ENCODE measurements at regions of chr10 and their contacts with region 1.

Region 1: DNA sequence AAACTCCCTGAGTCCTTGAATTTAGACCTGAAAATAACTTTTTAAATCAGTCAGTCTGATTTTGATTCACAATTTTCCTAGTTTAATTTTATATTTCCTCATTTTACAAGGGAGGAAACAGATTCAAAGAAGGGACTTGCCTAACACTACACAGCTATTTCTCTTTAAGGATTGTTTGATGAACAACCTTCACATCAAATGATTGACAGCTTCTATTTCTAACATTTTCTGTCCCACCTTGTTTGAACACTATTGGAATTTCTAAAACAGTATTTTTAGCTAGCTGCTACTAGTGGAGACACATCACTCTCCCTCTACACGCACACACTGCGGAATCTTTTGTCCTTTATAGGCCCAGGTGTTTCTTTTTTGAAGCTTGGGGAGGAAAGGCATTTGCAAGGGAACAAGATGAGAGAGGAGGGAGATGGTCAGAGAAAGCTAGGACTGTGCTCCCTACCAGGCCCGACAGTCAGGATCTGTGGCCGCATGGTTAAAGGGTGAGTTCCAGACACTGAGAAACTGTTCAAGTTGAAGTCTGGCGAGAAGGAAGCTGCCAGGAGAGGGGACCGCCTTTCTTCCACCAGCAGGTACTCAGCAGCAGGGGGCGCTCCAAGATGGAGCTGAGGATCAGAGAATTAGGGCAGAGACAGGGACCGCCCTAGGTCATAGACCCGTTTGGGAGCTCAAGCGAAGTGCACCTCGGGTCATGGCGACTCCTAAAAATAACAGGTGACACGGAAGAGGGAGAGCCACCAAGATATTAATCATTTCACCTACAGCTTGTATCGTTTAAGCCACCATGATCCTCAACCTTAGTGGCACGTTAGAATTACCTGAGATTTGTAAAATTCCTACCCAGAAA is 49.7 kb downstream of the DNAJC12 start:
- DNase-seq: no peak
- ATAC-seq: peak; percentile 84
- H3K4me3 ChIP-seq: no peak overlapping the region
- H3K27ac ChIP-seq: no peak overlapping the region
- H3K4me1 ChIP-seq: peaks cover 20% of the 10 kb centered on the region
- H3K27me3 ChIP-seq: no peaks in the 10 kb centered on the region
- CTCF ChIP-seq: peak; percentile 73 to 85 (median 83)
- EP300 ChIP-seq: no peak
- POLR2A ChIP-seq: no peak
- RAD21 ChIP-seq: peak; percentile 84

Region 2: DNA sequence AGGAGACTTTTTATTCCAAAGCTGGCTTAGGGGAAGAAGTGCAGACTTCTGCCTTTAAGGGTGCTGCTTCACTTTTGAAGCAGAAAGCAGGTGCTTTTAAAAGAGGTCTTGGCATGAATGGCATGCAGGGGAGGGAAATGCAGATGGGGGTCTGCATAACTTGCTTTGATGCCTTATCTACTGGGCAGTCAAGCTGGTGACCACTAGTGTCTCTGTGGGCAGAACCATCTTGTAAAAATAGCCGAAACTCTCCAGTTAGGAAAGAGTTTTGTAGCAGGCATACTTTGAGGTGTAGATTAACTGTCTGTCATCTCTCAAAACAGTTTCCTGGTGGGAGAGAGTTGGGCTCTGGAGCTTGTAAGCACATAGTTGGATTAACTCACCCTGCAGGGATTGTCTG is 82.3 kb before region 1 on chr10:
- CTCF ChIA-PET with region 1: no interaction called
- POLR2A ChIA-PET with region 1: no interaction called
- RAD21 ChIA-PET with region 1: no interaction called
- SMC1A ChIA-PET with region 1: no interaction called
- in situ Hi-C with region 1: no loop called
- intact Hi-C with region 1: no loop called
- DNase-seq: no peak
- ATAC-seq: no peak
- H3K4me3 ChIP-seq: no peak overlapping the region
- H3K27ac ChIP-seq: no peak overlapping the region
- H3K4me1 ChIP-seq: no peaks in the 10 kb centered on the region
- H3K27me3 ChIP-seq: no peaks in the 10 kb centered on the region
- CTCF ChIP-seq: no peak
- EP300 ChIP-seq: no peak
- POLR2A ChIP-seq: no peak
- RAD21 ChIP-seq: no peak

Region 3: GRCh38 chr10:67772894-67773511 is 15.3 kb before region 1 on chr10:
- CTCF ChIA-PET with region 1: interaction called, 40 read pairs
- POLR2A ChIA-PET with region 1: interaction called, 4 read pairs
- RAD21 ChIA-PET with region 1: interaction called, 6 read pairs
- SMC1A ChIA-PET with region 1: interaction called, 7 read pairs
- in situ Hi-C with region 1: no loop called
- intact Hi-C with region 1: no loop called
- DNase-seq: peak; percentile 90
- ATAC-seq: peak; percentile 93
- H3K4me3 ChIP-seq: no peak overlapping the region
- H3K27ac ChIP-seq: peak overlapping the region; percentile 82
- H3K4me1 ChIP-seq: peaks cover 42% of the 10 kb centered on the region
- H3K27me3 ChIP-seq: no peaks in the 10 kb centered on the region
- CTCF ChIP-seq: no peak
- EP300 ChIP-seq: peak; percentile 87 to 96
- POLR2A ChIP-seq: no peak
- RAD21 ChIP-seq: no peak

Region 4: GRCh38 chr10:67803588-67804394 is 15.5 kb after region 1 on chr10:
- CTCF ChIA-PET with region 1: interaction called, 19 read pairs
- POLR2A ChIA-PET with region 1: no interaction called
- RAD21 ChIA-PET with region 1: interaction called, 3 read pairs
- SMC1A ChIA-PET with region 1: interaction called, 6 read pairs
- in situ Hi-C with region 1: no loop called
- intact Hi-C with region 1: no loop called
- DNase-seq: no peak
- ATAC-seq: peak; percentile 86
- H3K4me3 ChIP-seq: no peak overlapping the region
- H3K27ac ChIP-seq: no peak overlapping the region
- H3K4me1 ChIP-seq: no peaks in the 10 kb centered on the region
- H3K27me3 ChIP-seq: no peaks in the 10 kb centered on the region
- CTCF ChIP-seq: no peak
- EP300 ChIP-seq: no peak
- POLR2A ChIP-seq: no peak
- RAD21 ChIP-seq: no peak

Region 5: DNA sequence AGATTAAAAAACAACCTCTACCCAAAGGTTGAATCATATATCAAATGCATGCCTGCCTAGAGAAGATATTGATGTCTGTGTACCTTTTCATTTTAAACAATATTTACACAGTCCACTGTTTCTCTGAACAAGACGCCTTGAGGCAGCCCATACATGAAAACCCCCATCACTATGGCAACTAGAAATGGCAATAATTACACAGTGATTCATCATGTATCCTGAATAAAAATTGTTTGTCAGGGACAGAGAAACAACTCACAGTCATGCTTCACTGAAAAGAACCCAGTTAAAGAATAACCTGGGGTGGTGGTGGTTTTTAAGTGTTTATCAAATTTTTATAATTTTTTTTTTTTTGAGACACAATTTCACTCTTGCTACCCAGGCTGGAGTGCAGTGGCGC is 30.1 kb after region 1 on chr10:
- CTCF ChIA-PET with region 1: interaction called, 18 read pairs
- POLR2A ChIA-PET with region 1: no interaction called
- RAD21 ChIA-PET with region 1: interaction called, 3 read pairs
- SMC1A ChIA-PET with region 1: no interaction called
- in situ Hi-C with region 1: no loop called
- intact Hi-C with region 1: no loop called
- DNase-seq: no peak
- ATAC-seq: peak; percentile 75
- H3K4me3 ChIP-seq: no peak overlapping the region
- H3K27ac ChIP-seq: no peak overlapping the region
- H3K4me1 ChIP-seq: no peaks in the 10 kb centered on the region
- H3K27me3 ChIP-seq: no peaks in the 10 kb centered on the region
- CTCF ChIP-seq: no peak
- EP300 ChIP-seq: no peak
- POLR2A ChIP-seq: no peak
- RAD21 ChIP-seq: no peak

Region 6: DNA sequence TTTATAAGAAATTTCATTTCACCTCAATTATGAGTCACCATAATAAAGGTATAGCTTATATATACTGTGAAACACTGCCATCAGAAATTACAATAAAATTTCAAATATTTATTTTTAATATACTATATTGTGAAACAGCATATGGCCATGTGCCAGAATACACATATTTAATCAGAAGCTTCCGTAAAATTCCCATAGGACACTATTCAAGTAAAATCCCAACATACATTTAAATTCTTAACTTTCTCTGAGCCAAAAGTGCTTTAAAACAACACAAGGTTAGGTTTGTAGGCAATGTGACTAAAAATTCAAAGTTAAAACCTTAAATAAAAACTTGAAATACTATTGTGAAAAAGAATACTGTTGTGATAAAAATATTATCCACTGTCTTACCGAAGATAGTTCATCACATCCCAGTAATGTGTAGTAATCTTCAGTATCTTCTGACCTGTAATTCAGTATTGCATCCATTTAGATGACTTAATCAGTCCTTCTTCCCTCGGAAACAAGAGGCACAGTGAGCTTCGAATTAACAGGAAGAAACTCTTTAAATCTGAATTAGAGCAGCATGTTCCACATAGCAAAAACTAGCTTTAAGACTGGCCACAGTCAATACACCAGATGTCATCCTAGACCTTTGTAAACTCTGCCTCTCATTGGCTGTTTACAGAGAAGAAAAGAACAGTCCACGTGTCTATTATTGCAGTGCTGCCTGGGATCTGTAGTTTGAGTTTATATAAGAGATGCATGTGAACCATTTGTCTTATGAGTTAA is 49.5 kb after region 1 on chr10 and contains the start of gene DNAJC12:
- CTCF ChIA-PET with region 1: interaction called, 20 read pairs
- POLR2A ChIA-PET with region 1: interaction called, 5 read pairs
- RAD21 ChIA-PET with region 1: interaction called, 8 read pairs
- SMC1A ChIA-PET with region 1: interaction called, 7 read pairs
- in situ Hi-C with region 1: no loop called
- intact Hi-C with region 1: no loop called
- DNase-seq: no peak
- ATAC-seq: peak; percentile 99
- H3K4me3 ChIP-seq: no peak within 1 kb of the TSS
- H3K27ac ChIP-seq: no peak within 1 kb of the TSS
- H3K4me1 ChIP-seq: no peaks in the 10 kb centered on the region
- H3K27me3 ChIP-seq: no peaks in the 10 kb centered on the region
- CTCF ChIP-seq: no peak; a peak in 1 of 6 replicates
- EP300 ChIP-seq: no peak
- POLR2A ChIP-seq: no peak
- RAD21 ChIP-seq: no peak
- polyA plus RNA-seq, gene DNAJC12: 3.3 to 4.5 TPM

Region 7: DNA sequence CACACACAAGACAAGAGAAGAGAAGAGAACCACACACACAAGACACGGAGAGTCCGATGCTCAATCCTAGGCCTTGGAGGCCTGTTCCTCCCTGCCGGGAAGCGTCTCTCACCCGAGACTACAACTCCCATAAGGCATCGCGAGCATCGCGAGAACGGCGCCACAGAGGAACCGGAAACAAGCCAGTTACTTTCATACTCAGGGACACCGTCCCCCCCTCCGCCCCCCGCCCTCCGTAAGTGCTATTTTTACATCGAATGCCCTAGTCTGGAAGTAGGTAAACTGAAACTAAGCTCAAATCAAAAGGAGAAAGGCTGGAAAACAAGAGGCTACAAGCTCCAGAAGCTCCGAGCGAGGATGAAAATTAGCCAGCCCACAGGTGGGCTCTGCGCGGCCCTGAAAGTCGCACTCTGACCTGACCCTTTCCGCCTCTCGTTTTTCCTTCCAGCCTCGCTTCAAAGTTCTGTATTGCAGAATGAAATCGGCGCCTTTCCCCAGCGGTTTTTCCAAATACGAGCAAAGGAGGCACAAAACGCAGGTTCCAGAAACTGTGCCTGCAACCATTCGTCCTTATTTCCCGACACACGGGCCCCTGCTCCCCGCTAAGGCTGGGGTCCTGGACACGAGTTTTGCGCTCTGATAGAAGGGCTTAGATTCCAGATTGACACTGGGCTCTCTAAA is 61.2 kb after region 1 on chr10:
- CTCF ChIA-PET with region 1: interaction called, 59 read pairs
- POLR2A ChIA-PET with region 1: interaction called, 4 read pairs
- RAD21 ChIA-PET with region 1: interaction called, 34 read pairs
- SMC1A ChIA-PET with region 1: interaction called, 28 read pairs
- in situ Hi-C with region 1: no loop called
- intact Hi-C with region 1: loop called (anchors 1 kb)
- DNase-seq: peak; percentile 84
- ATAC-seq: peak; percentile 98
- H3K4me3 ChIP-seq: peak overlapping the region; percentile 82
- H3K27ac ChIP-seq: peak overlapping the region; percentile 98
- H3K4me1 ChIP-seq: no peaks in the 10 kb centered on the region
- H3K27me3 ChIP-seq: no peaks in the 10 kb centered on the region
- CTCF ChIP-seq: no peak
- EP300 ChIP-seq: no peak
- POLR2A ChIP-seq: peak; percentile 71
- RAD21 ChIP-seq: no peak

Region 8: GRCh38 chr10:69237528-69238159 is 1449.4 kb after region 1 on chr10:
- CTCF ChIA-PET with region 1: no interaction called
- POLR2A ChIA-PET with region 1: no interaction called
- RAD21 ChIA-PET with region 1: no interaction called
- SMC1A ChIA-PET with region 1: no interaction called
- in situ Hi-C with region 1: no loop called
- intact Hi-C with region 1: no loop called
- DNase-seq: no peak
- ATAC-seq: peak; percentile 100
- H3K4me3 ChIP-seq: no peak overlapping the region
- H3K27ac ChIP-seq: no peak overlapping the region
- H3K4me1 ChIP-seq: no peaks in the 10 kb centered on the region
- H3K27me3 ChIP-seq: no peaks in the 10 kb centered on the region
- CTCF ChIP-seq: peak; percentile 85 to 98 (median 93)
- EP300 ChIP-seq: no peak
- POLR2A ChIP-seq: no peak
- RAD21 ChIP-seq: peak; percentile 94